Esophagus muscularis mucosa (tissue), 4 donors: ENCODE measurements at regions of chr6 and their contacts with region 1.

Region 1: DNA sequence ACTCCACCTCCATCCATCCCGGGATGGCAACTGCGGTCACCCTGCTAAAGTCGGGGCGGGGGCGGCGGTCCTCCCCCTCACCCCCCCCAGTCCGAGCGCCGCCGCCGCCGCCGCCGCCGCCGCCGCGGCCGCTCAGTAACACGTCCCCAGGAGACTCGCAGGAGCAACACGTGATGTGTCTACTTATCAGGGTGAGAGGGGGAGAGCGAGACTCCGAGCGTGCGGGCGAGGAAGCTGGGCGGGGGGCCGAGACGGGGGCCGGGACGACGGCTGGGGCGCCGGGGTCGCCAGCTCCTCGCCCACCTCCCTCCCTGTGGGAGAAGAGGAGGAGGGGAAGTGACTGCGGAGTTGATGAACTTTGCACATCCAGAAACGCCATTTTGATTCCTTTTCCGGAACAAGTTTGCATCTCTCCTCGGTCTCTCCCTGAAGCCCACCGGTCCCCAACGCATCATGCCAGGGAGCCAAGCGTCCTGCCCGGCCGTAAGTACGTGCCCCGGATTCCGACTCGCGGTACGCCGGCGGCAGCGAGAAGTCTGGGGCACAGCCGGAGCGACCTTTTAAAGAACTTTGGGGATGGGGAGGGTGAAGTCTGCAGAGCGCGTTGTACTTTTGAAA is at the start of gene RREB1:
- DNase-seq: no peak
- H3K4me3 ChIP-seq: peak within 1 kb of the TSS; percentile 78 to 99 (median 90)
- H3K27ac ChIP-seq: peak within 1 kb of the TSS; percentile 95 to 99 (median 98)
- H3K4me1 ChIP-seq: peaks cover 13 to 45% (median 39%) of the 10 kb centered on the region in 4 donors
- H3K27me3 ChIP-seq: no peaks in the 10 kb centered on the region
- CTCF ChIP-seq: no peak
- EP300 ChIP-seq: no peak
- POLR2A ChIP-seq: peak; percentile 61
- total RNA-seq, gene RREB1: 17.7 to 36.6 (median 28.8) TPM

Region 2: DNA sequence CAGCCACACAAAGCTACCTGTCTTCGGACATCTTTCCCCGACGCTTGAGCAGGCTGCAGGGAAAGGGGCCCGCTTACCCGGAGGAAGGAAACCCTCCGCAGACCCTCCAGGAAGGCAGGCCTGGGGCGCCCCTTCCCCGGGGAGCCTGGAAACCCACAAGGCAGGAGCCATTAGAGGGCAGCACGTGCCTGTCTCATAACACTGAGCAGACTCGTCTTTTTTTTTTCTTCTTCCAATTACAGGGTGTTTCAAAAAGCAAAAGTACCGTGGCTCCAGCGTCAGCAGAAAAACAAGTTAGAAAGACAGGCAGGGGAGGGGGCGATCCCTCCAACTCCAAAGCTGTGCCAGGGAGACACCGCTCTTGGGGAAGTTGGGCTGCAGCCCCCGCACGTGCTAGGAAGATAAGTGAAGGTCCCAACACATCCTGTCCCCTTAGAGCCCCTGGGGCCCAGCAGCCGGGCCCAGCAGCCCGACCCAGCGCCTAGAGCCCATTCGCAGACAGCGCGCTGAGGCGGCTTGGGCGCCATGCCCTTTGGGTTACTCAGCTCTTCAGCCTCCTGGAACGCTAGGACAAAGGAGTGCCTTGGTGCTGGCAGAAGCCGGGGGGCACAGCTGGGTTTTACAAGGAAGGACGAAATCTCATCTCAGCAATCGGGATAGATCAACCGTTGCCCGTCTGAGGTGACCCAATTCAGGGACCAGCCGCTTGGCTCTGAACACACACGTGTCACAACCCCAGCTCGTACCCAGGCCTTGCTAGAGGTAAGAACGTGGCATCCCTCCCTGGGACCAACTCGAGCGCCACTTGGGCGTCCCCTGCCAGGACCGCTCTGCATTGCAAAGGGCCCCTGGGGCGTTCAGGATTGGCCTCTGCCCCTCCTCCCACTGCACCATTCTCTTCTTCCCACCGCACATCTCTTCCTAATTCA is 382.9 kb before region 1 on chr6:
- intact Hi-C with region 1: loop called (anchors 10 kb)
- DNase-seq: peak; percentile 93
- H3K4me3 ChIP-seq: peak overlapping the region; percentile 44 to 55 (median 48)
- H3K27ac ChIP-seq: peak overlapping the region; percentile 65 to 80 (median 71)
- H3K4me1 ChIP-seq: peaks cover 19 to 32% (median 23%) of the 10 kb centered on the region in 4 donors
- H3K27me3 ChIP-seq: no peaks in the 10 kb centered on the region
- CTCF ChIP-seq: peak; percentile 62 to 72 (median 64)
- EP300 ChIP-seq: no peak
- POLR2A ChIP-seq: no peak

Region 3: GRCh38 chr6:7051233-7052114 is 56.2 kb before region 1 on chr6:
- intact Hi-C with region 1: loop called (anchors 10 kb)
- DNase-seq: no peak
- H3K4me3 ChIP-seq: peak overlapping the region; percentile 69 to 72 (median 70)
- H3K27ac ChIP-seq: peak overlapping the region; percentile 68 to 81 (median 77)
- H3K4me1 ChIP-seq: peaks cover 16 to 24% (median 23%) of the 10 kb centered on the region in 4 donors
- H3K27me3 ChIP-seq: no peaks in the 10 kb centered on the region
- CTCF ChIP-seq: no peak
- EP300 ChIP-seq: no peak
- POLR2A ChIP-seq: no peak

Region 4: GRCh38 chr6:7140631-7141378 is 33.1 kb after region 1 on chr6:
- intact Hi-C with region 1: loop called (anchors 5 kb)
- DNase-seq: peak; percentile 99
- H3K4me3 ChIP-seq: peak overlapping the region; percentile 64 to 71 (median 66)
- H3K27ac ChIP-seq: peak overlapping the region; percentile 92 to 97 (median 94)
- H3K4me1 ChIP-seq: peaks cover 72 to 86% (median 84%) of the 10 kb centered on the region in 4 donors
- H3K27me3 ChIP-seq: no peaks in the 10 kb centered on the region
- CTCF ChIP-seq: no peak
- EP300 ChIP-seq: no peak
- POLR2A ChIP-seq: peak; percentile 69

Region 5: GRCh38 chr6:7742223-7742785 is 634.6 kb after region 1 on chr6:
- intact Hi-C with region 1: no loop called
- DNase-seq: no peak
- H3K4me3 ChIP-seq: no peak overlapping the region
- H3K27ac ChIP-seq: no peak overlapping the region
- H3K4me1 ChIP-seq: no peaks in the 10 kb centered on the region
- H3K27me3 ChIP-seq: peaks cover 0 to 26% (median 0%) of the 10 kb centered on the region in 4 donors
- CTCF ChIP-seq: no peak
- EP300 ChIP-seq: no peak
- POLR2A ChIP-seq: no peak